Activated CD4-positive, alpha-beta T cell treated with anti-CD3 and anti-CD28 coated beads for 36 hours (primary cell): ENCODE measurements at regions of chr19 and their contacts with region 1.

Region 1: DNA sequence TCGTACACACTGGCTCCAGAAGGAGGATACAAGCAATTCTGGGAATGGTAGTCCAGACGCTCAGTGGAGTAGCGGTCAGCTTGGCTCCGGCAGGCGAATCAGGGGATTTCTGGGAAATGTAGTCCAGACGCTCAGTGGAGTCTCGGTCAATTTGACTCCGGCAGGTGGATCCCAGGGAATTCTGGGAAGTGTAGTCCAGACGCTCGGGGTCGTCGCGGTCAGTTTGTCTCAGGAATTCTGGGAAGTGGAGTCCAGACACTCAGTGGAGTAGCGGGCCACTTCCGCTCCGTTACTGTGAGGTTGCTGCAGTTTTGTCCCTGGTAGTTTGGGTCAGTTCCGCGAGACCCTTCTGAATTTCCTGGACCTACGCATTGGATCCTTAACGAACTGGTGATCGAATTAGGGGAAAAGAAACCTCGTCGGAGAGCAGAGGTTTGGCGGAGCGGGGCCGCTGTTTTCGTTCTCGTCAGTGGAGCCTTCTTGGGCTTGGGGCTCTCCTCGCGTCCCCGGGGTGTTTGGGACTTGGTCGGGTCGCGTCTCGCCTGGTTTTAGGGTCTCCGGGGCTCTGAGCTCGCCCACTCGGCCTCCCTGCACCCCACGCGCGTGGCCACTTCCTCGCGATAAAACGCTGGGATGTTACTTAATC is at the start of gene ZNF225:
- DNase-seq: peak; percentile 88
- ATAC-seq: peak; percentile 94
- H3K4me3 Mint-ChIP-seq: peak within 1 kb of the TSS; percentile 99
- H3K27ac Mint-ChIP-seq: peak within 1 kb of the TSS; percentile 93
- H3K4me1 Mint-ChIP-seq: peaks cover 19% of the 10 kb centered on the region
- H3K27me3 Mint-ChIP-seq: no peaks in the 10 kb centered on the region
- total RNA-seq, gene ZNF225: 2.6 to 3.1 TPM

Region 2: GRCh38 chr19:43950834-43951645 is 162.2 kb before region 1 on chr19 and contains the start of gene ZNF221:
- CTCF ChIA-PET with region 1: no interaction called
- POLR2A ChIA-PET with region 1: no interaction called
- intact Hi-C with region 1: loop called in 1 of 2 experiments (anchors 1 kb)
- DNase-seq: peak; percentile 84
- ATAC-seq: peak; percentile 95
- H3K4me3 Mint-ChIP-seq: peak within 1 kb of the TSS; percentile 83
- H3K27ac Mint-ChIP-seq: peak within 1 kb of the TSS; percentile 85
- H3K4me1 Mint-ChIP-seq: peaks cover 6% of the 10 kb centered on the region
- H3K27me3 Mint-ChIP-seq: peaks cover 17% of the 10 kb centered on the region
- total RNA-seq, gene ZNF221: 1.8 to 1.9 TPM

Region 3: DNA sequence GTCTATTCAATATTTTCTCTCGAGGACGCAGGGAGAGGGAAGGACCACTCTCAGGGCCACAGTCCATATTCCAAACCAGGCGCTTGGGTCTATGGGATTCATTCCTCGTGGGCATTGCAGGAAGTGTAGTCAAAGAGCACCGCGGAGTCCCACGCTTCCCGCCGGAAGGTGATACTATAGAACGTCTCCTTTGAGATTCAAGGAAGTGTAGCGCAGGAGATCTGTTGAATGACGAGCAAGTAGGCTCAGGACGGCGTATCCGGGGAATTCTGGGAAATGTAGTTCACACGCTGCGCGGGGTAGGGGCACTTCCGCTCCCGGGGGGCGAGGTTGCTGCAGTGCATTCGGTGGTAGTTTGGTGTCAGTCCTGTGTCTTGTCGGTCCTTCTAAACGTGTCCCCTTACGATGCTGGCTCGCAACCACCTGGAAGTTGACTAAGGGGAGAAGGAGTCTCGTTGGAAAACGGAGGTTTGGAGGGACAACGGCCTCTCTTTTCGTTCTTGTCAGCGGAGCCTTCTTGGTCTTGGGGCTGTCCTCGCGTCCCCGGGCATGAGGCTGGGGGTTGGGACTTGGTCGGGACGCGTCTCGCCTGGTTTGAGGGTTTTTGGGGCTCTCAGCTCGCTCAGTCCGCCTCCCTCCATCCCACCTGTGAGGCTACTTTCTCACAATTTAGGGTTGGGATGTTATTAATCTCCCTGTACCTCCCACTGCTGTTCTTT is 41.3 kb before region 1 on chr19 and contains the start of gene ZNF284:
- CTCF ChIA-PET with region 1: no interaction called
- POLR2A ChIA-PET with region 1: no interaction called
- intact Hi-C with region 1: loop called in 1 of 2 experiments (anchors 1 kb)
- DNase-seq: peak; percentile 88
- ATAC-seq: peak; percentile 99
- H3K4me3 Mint-ChIP-seq: peak within 1 kb of the TSS; percentile 83
- H3K27ac Mint-ChIP-seq: peak within 1 kb of the TSS; percentile 78
- H3K4me1 Mint-ChIP-seq: peaks cover 23% of the 10 kb centered on the region
- H3K27me3 Mint-ChIP-seq: peaks cover 2% of the 10 kb centered on the region
- total RNA-seq, gene ZNF284: 2.1 TPM

Region 4: DNA sequence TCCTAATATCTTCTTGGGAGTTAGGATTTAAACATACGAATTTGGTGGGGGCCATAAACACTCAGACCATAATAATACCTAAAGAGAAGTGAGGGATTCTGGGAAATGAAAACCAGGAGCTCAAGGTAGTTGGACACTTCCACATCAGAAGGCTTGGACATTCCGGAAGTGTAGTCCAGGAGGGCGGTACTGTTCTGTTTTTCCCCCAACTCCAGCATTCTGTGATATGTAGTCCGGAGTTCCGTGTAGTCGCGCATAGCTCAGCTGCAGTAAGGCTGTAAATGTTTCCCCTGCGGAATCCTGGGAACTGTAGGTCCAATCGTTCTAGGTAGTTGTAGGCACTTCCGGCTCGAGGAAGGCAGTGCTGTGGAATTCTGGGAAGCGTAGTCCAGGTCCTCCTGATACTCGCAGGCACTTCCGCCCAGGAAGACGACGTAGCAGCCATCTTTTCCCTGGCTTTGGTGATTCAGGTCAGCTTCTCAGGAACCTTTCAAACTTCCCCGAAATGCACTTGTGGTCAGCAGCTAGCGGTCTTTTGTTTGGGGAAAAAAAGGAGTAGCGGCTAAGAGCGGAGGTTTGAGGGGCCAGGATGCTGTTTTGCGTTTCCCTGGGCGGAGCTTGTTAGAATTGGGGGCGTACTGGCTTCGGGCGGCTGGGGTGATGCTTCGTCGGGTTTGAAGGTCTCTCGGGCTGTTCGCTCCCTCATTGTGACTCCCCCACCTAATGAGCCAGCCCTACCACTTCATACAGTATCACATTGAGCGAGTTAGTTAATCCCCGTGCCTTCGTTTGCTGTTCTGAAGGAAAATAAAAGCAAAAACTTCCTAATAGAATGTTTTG is 51.6 kb after region 1 on chr19 and contains the start of gene ZNF226:
- CTCF ChIA-PET with region 1: no interaction called
- POLR2A ChIA-PET with region 1: no interaction called
- intact Hi-C with region 1: loop called (anchors 1 to 2 kb)
- DNase-seq: peak; percentile 87
- ATAC-seq: peak; percentile 89
- H3K4me3 Mint-ChIP-seq: peak within 1 kb of the TSS; percentile 87
- H3K27ac Mint-ChIP-seq: peak within 1 kb of the TSS; percentile 96
- H3K4me1 Mint-ChIP-seq: peaks cover 30% of the 10 kb centered on the region
- H3K27me3 Mint-ChIP-seq: no peaks in the 10 kb centered on the region
- total RNA-seq, gene ZNF226: 11.3 to 15.2 TPM

Region 5: GRCh38 chr19:44212250-44212865 is 99.1 kb after region 1 on chr19 and contains the start of gene ZNF227:
- CTCF ChIA-PET with region 1: interaction called, 3 read pairs
- POLR2A ChIA-PET with region 1: no interaction called
- intact Hi-C with region 1: loop called (anchors 1 to 2 kb)
- DNase-seq: peak; percentile 90
- ATAC-seq: peak; percentile 98
- H3K4me3 Mint-ChIP-seq: peak within 1 kb of the TSS; percentile 90
- H3K27ac Mint-ChIP-seq: peak within 1 kb of the TSS; percentile 92
- H3K4me1 Mint-ChIP-seq: peaks cover 22% of the 10 kb centered on the region
- H3K27me3 Mint-ChIP-seq: no peaks in the 10 kb centered on the region
- total RNA-seq, gene ZNF227: 19.4 to 20.6 TPM

Region 6: DNA sequence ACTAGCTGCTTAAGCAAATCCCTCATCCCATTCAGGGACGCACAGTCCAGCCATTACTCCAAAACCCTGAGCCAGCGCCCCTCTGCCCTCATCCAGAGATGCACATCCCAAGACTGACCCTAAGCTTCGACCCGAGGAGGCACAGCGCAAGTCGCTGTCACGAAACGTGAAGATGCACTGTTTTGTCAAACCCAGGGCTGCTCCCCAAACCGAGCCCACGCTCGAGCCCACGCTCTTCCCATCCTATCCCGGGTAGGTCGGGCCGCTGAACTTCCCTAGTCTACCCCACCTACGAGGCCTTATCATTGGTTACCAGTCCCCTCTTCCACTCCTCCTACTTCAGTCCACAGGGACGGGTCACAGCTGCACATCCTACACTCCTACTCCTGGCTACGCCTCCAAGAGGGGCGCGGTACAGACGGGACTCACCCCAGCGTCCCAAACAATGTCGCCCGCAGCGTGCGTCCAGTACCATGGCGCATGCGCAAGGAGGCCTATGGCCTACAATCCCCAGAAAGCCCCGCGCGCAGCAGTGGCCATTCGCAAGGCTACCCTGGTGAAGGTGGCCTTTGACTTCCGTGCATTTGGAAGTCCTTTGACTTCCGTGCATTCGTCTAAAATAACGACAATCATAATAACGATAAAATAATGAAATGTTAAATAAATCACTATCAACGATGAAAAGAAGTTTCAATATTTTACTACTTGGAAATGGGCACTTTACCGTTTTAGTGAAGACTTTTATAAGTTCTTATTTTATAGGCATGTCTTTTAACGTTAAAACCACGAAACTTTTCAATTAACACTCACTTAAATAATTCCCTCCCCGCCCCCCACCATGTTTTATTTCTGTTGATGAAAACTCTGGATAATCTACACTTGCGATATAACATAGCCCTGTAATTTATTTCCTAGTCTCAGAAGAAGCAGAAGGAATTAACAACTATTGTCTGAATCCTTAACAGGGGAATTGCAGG is 288.2 kb after region 1 on chr19 and contains the start of gene ZNF285:
- CTCF ChIA-PET with region 1: no interaction called
- POLR2A ChIA-PET with region 1: no interaction called
- intact Hi-C with region 1: loop called in 1 of 2 experiments (anchors 1 kb)
- DNase-seq: peak; percentile 91
- ATAC-seq: peak; percentile 99
- H3K4me3 Mint-ChIP-seq: peak within 1 kb of the TSS; percentile 75
- H3K27ac Mint-ChIP-seq: peak within 1 kb of the TSS; percentile 76
- H3K4me1 Mint-ChIP-seq: peaks cover 10% of the 10 kb centered on the region
- H3K27me3 Mint-ChIP-seq: no peaks in the 10 kb centered on the region
- total RNA-seq, gene ZNF285: 1.2 to 1.4 TPM